HepG2 (cell line): ENCODE measurements at regions of chr17 and their contacts with region 1.

Region 1: DNA sequence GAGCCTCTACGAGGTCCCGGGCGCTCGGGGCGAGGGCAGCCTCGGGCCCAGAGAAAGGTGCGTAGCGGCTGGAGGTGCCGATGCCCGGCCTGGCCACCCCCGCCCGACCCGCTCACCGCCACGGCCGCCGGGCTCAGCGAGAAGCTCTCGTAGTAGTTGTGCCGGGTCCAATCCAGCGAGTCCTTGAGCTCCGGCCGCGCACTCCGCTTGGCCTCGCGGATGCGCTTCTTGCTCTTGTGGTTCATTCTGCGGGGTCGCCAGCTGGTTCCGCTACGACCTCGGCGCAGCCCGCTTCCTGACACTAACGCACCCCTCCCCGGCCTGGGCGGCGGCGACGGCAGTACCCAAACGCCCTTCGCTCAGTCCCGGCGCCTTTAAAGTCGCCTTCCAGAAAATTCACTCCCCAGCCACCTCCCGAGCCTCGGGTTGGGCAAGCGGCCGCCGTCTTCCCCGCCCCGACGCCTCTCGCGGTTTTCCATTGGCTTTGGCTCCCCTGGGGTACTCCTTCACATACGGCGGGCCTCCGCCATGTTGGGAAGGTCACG is at the start of gene JMJD6:
- DNase-seq: peak; percentile 93
- ATAC-seq: peak; percentile 82
- H3K4me3 ChIP-seq: peak within 1 kb of the TSS; percentile 78 to 98 (median 95)
- H3K27ac ChIP-seq: peak within 1 kb of the TSS; percentile 98
- H3K4me1 ChIP-seq: peaks cover 69% of the 10 kb centered on the region
- H3K27me3 ChIP-seq: no peaks in the 10 kb centered on the region
- CTCF ChIP-seq: no peak
- EP300 ChIP-seq: peak in 1 of 2 experiments; percentile 20; a peak in 1 of 4 replicates
- POLR2A ChIP-seq: peak in 1 of 2 experiments; percentile 75; a peak in 3 of 4 replicates
- RAD21 ChIP-seq: peak; percentile 12; the same call in 1 of the 2 replicates
- total RNA-seq, gene JMJD6: 41.0 and 49.1 TPM in 2 replicates

Region 2: GRCh38 chr17:76681222-76682137 is 44.8 kb before region 1 on chr17:
- CTCF ChIA-PET with region 1: no interaction called
- POLR2A ChIA-PET with region 1: no interaction called
- in situ Hi-C with region 1: no loop called
- intact Hi-C with region 1: no loop called
- DNase-seq: peak; percentile 58
- ATAC-seq: peak; percentile 56
- H3K4me3 ChIP-seq: no peak overlapping the region
- H3K27ac ChIP-seq: no peak overlapping the region
- H3K4me1 ChIP-seq: peaks cover 26% of the 10 kb centered on the region
- H3K27me3 ChIP-seq: no peaks in the 10 kb centered on the region
- CTCF ChIP-seq: peak; percentile 94
- EP300 ChIP-seq: no peak
- POLR2A ChIP-seq: no peak
- RAD21 ChIP-seq: peak; percentile 85

Region 3: GRCh38 chr17:76714822-76715495 is 11.3 kb before region 1 on chr17:
- CTCF ChIA-PET with region 1: no interaction called
- POLR2A ChIA-PET with region 1: interaction called, 15 read pairs
- in situ Hi-C with region 1: no loop called
- intact Hi-C with region 1: no loop called
- DNase-seq: no peak
- ATAC-seq: peak; percentile 14; the same call in 2 of the 3 replicates
- H3K4me3 ChIP-seq: no peak overlapping the region
- H3K27ac ChIP-seq: no peak overlapping the region
- H3K4me1 ChIP-seq: peaks cover 22% of the 10 kb centered on the region
- H3K27me3 ChIP-seq: no peaks in the 10 kb centered on the region
- CTCF ChIP-seq: peak; percentile 84
- EP300 ChIP-seq: no peak
- POLR2A ChIP-seq: no peak
- RAD21 ChIP-seq: peak; percentile 59; the same call in 1 of the 2 replicates

Region 4: GRCh38 chr17:76737082-76737675 is 10.9 kb after region 1 on chr17 and contains the start of gene SRSF2:
- CTCF ChIA-PET with region 1: no interaction called
- POLR2A ChIA-PET with region 1: interaction called, 71 read pairs
- in situ Hi-C with region 1: no loop called
- intact Hi-C with region 1: no loop called
- DNase-seq: peak; percentile 98
- ATAC-seq: peak; percentile 74
- H3K4me3 ChIP-seq: peak within 1 kb of the TSS; percentile 93 to 100 (median 100)
- H3K27ac ChIP-seq: peak within 1 kb of the TSS; percentile 97
- H3K4me1 ChIP-seq: peaks cover 51% of the 10 kb centered on the region
- H3K27me3 ChIP-seq: peaks cover 0 to 3% of the 10 kb centered on the region in 2 experiments; a peak in 1 of 5 replicates
- CTCF ChIP-seq: peak; percentile 18
- EP300 ChIP-seq: peak; percentile 57 to 71; a peak in 3 of 4 replicates
- POLR2A ChIP-seq: peak; percentile 100
- RAD21 ChIP-seq: peak; percentile 63
- total RNA-seq, gene SRSF2: 249 and 319 TPM in 2 replicates

Region 5: GRCh38 chr17:76781056-76781982 is 55.0 kb after region 1 on chr17:
- CTCF ChIA-PET with region 1: no interaction called
- POLR2A ChIA-PET with region 1: no interaction called
- in situ Hi-C with region 1: no loop called
- intact Hi-C with region 1: loop called (anchors 1 kb)
- DNase-seq: no peak
- ATAC-seq: peak; percentile 53
- H3K4me3 ChIP-seq: no peak overlapping the region
- H3K27ac ChIP-seq: no peak overlapping the region
- H3K4me1 ChIP-seq: no peaks in the 10 kb centered on the region
- H3K27me3 ChIP-seq: no peaks in the 10 kb centered on the region; a peak in 1 of 5 replicates
- CTCF ChIP-seq: peak; percentile 49
- EP300 ChIP-seq: no peak
- POLR2A ChIP-seq: no peak
- RAD21 ChIP-seq: 0 out of 2 replicates have a peak, but pooled peaks have one; percentile 27